H1 (cell line): ENCODE measurements at regions of chr2 and their contacts with region 1.

Region 1: GRCh38 chr2:209423562-209424198 is at the start of gene MAP2:
- DNase-seq: peak; percentile 54 to 89
- H3K4me3 ChIP-seq: peak within 1 kb of the TSS; percentile 54 to 91 (median 67)
- H3K27ac ChIP-seq: no peak within 1 kb of the TSS
- H3K4me1 ChIP-seq: peaks cover 0 to 6% (median 1%) of the 10 kb centered on the region in 4 experiments; a peak in 4 of 7 replicates
- H3K27me3 ChIP-seq: no peaks in the 10 kb centered on the region; a peak in 2 of 7 replicates
- CTCF ChIP-seq: peak; percentile 85 to 100 (median 90)
- EP300 ChIP-seq: 0 out of 3 replicates have a peak, but pooled peaks of 1 of the 2 experiments have one; percentile 26
- POLR2A ChIP-seq: peak in 1 of 2 experiments; percentile 50; a peak in 1 of 3 replicates
- RAD21 ChIP-seq: peak; percentile 53 to 77
- total RNA-seq, gene MAP2: 4.6 and 5.9 TPM in 2 replicates

Region 2: DNA sequence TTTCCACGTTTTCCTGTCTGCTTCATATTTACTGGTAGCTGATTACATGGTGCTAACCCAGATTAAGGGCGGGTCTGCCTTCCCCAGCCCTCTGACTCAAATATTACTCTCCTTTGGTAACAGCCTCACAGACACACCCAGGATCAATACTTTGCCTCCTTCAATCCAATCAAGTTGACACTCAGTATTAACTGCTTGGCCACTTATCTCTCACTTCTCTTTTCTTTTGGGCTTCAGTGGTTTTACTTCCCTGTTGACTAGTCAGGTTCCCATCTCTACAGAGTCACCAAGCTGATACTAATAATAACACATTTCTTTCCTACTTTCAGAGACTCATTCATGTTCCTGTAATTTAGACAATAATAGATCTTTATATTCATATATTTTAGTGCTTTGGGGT is 302.0 kb before region 1 on chr2:
- CTCF ChIA-PET with region 1: no interaction called
- POLR2A ChIA-PET with region 1: no interaction called
- DNase-seq: no peak
- H3K4me3 ChIP-seq: no peak overlapping the region
- H3K27ac ChIP-seq: no peak overlapping the region
- H3K4me1 ChIP-seq: no peaks in the 10 kb centered on the region
- H3K27me3 ChIP-seq: no peaks in the 10 kb centered on the region
- CTCF ChIP-seq: no peak
- EP300 ChIP-seq: no peak
- POLR2A ChIP-seq: no peak
- RAD21 ChIP-seq: no peak

Region 3: DNA sequence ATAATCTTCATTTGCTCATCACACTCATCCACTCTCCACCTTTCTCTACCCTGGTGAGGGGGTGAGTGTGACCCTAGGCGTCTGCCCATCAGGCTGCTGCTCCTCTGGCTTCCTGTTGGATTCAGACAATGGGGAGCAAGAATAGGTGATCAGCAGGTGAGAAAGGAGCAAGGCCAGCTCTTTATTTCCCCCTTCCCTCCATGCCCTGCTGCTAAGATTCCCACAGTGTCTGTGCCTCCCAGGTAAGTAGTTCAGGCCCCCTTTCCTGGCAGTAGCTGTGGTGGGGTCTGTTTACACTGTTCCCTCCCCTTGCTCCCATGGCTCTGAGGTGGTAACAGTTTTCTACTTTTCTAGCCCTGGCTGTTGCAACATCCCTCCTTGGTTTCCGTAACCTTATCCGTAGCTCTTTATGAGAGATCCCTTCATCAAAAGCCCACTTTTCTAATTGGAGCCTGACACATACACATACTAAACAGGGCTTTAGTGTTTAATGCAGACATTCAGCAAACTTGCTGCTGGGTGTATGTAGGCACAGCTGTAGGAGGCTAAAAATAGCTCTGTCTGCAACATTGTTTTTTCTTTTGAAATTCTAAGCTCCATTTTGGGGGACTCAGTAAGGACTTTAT is 27.6 kb after region 1 on chr2:
- CTCF ChIA-PET with region 1: interaction called, 18 read pairs
- POLR2A ChIA-PET with region 1: no interaction called
- DNase-seq: peak in 1 of 2 experiments; percentile 63
- H3K4me3 ChIP-seq: peak overlapping the region in 1 of 4 experiments; percentile 28; a peak in 1 of 8 replicates
- H3K27ac ChIP-seq: no peak overlapping the region
- H3K4me1 ChIP-seq: peaks cover 0 to 16% (median 4%) of the 10 kb centered on the region in 4 experiments; a peak in 3 of 7 replicates
- H3K27me3 ChIP-seq: no peaks in the 10 kb centered on the region; a peak in 1 of 7 replicates
- CTCF ChIP-seq: no peak
- EP300 ChIP-seq: no peak
- POLR2A ChIP-seq: no peak
- RAD21 ChIP-seq: no peak

Region 4: DNA sequence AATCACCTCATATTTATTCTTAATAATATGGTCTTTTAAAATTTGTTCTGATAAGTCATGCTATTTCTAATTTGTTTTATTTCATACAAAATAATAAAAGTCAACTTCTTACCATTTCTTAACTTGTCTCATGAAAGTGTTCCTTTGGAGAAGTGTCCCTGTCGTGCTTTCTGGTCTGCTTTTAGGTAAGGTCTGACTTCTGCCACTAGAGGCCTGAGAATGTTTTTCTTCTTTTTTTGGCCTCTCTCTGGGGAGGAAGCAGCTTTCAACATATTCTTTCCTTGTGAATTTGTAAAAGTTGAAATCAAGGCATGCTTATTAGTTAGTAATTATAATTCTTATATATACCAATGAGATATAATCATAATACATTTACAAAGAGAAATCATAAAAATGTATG is 39.5 kb after region 1 on chr2:
- CTCF ChIA-PET with region 1: interaction called, 12 read pairs
- POLR2A ChIA-PET with region 1: no interaction called
- DNase-seq: no peak
- H3K4me3 ChIP-seq: no peak overlapping the region
- H3K27ac ChIP-seq: no peak overlapping the region
- H3K4me1 ChIP-seq: peaks cover 0 to under 1% (median 0%) of the 10 kb centered on the region in 4 experiments; a peak in 2 of 7 replicates
- H3K27me3 ChIP-seq: no peaks in the 10 kb centered on the region
- CTCF ChIP-seq: peak in 2 of 3 experiments; percentile 31 to 50; a peak in 3 of 4 replicates
- EP300 ChIP-seq: no peak
- POLR2A ChIP-seq: no peak
- RAD21 ChIP-seq: peak; percentile 13 to 29; a peak in 2 of 4 replicates

Region 5: GRCh38 chr2:209472112-209472832 is 48.6 kb after region 1 on chr2:
- CTCF ChIA-PET with region 1: interaction called, 10 read pairs
- POLR2A ChIA-PET with region 1: no interaction called
- DNase-seq: no peak
- H3K4me3 ChIP-seq: no peak overlapping the region
- H3K27ac ChIP-seq: no peak overlapping the region
- H3K4me1 ChIP-seq: no peaks in the 10 kb centered on the region; a peak in 2 of 7 replicates
- H3K27me3 ChIP-seq: no peaks in the 10 kb centered on the region
- CTCF ChIP-seq: no peak
- EP300 ChIP-seq: no peak
- POLR2A ChIP-seq: no peak
- RAD21 ChIP-seq: no peak

Region 6: DNA sequence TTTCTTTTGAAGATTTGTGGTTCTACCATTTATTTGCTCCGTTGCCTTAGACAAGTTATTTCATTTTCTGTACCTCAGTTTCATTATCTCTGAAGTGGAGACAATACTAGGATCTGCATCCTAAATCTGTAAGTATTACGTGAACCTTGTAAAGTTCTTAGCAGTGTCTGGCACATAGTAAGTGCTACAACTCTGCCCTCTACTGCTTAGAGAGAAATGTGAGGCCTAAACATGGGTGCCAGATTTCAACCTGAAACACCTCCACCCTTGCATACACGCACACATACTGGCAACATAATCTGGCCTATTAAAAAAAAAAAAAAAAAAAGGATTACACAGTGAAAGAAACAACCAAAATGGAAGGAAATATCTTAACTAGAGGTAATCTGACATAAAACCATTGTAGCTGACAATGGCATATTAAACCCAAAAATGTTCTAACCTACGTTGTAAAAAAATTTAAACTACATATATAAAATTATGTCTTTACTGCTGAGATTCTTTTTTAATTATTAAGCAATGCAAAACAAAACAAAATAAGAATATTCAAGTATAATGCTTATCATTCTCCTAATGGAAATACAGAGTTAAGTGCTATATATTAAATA is 132.8 kb after region 1 on chr2:
- CTCF ChIA-PET with region 1: interaction called, 10 read pairs
- POLR2A ChIA-PET with region 1: no interaction called
- DNase-seq: no peak
- H3K4me3 ChIP-seq: no peak overlapping the region
- H3K27ac ChIP-seq: no peak overlapping the region
- H3K4me1 ChIP-seq: no peaks in the 10 kb centered on the region
- H3K27me3 ChIP-seq: no peaks in the 10 kb centered on the region
- CTCF ChIP-seq: peak in 2 of 3 experiments; percentile 46 to 58; a peak in 2 of 4 replicates
- EP300 ChIP-seq: no peak
- POLR2A ChIP-seq: no peak
- RAD21 ChIP-seq: peak; percentile 70 to 80

Region 7: GRCh38 chr2:209577376-209578357 is 154.0 kb after region 1 on chr2:
- CTCF ChIA-PET with region 1: interaction called, 22 read pairs
- POLR2A ChIA-PET with region 1: no interaction called
- DNase-seq: no peak
- H3K4me3 ChIP-seq: no peak overlapping the region
- H3K27ac ChIP-seq: no peak overlapping the region
- H3K4me1 ChIP-seq: peaks cover 0 to 11% (median 5%) of the 10 kb centered on the region in 4 experiments; a peak in 5 of 7 replicates
- H3K27me3 ChIP-seq: no peaks in the 10 kb centered on the region
- CTCF ChIP-seq: no peak; a peak in 1 of 4 replicates
- EP300 ChIP-seq: no peak
- POLR2A ChIP-seq: no peak
- RAD21 ChIP-seq: no peak; a peak in 1 of 4 replicates